ENCODE measurements at regions of chr7 and their contacts with region 1.

Region 1: DNA sequence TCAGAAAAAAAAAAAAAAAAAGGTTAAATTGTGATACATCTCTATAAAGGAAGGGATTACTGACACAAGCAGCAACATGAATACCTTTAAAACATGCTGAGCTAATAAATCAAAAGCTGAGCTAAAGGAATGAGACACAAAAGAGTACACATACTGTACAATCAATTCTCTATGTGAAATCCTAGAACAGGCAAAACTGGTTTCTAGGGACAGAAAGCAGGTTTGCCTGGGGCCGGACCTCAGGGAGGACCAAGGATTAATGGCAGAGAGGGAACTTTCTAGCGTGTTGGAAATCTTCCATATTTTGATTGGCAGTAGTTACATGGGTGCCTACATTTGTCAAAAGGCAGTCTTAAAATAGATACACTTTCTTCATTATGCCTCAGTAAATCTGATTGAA is 52.5 kb downstream of the KLRG2 start:
- DNase-seq: no peak
- ATAC-seq: no peak
- H3K4me3 ChIP-seq: no peak overlapping the region
- H3K27ac ChIP-seq: no peak overlapping the region
- H3K4me1 ChIP-seq: no peaks in the 10 kb centered on the region
- H3K27me3 ChIP-seq: no peaks in the 10 kb centered on the region
- CTCF ChIP-seq: no peak
- EP300 ChIP-seq: no peak
- POLR2A ChIP-seq: no peak
- RAD21 ChIP-seq: no peak

Region 2: DNA sequence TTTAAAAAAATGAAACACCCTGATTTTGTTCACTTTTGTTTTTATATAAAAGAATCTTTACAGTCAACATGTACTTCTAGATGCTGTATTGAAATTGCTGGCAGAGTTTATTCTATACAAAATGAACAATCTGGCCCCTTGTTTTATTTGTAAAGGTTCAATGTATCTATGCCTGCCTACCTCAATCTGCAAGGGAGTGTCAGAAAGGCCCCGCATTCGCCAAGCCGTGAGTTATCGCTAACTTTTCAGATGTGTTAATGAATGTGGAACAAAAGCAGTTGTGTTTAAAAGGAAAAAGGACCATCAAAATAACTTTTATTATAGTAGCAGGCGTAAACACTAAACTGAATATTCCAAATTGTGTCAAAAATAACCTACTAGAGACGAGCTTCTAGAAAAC is 56.8 kb before region 1 on chr7:
- CTCF ChIA-PET with region 1: interaction called, 14 read pairs
- POLR2A ChIA-PET with region 1: interaction called, 6 read pairs
- RAD21 ChIA-PET with region 1: no interaction called
- SMC1A ChIA-PET with region 1: no interaction called
- in situ Hi-C with region 1: no loop called
- intact Hi-C with region 1: no loop called
- DNase-seq: no peak
- ATAC-seq: no peak
- H3K4me3 ChIP-seq: no peak overlapping the region
- H3K27ac ChIP-seq: no peak overlapping the region
- H3K4me1 ChIP-seq: no peaks in the 10 kb centered on the region
- H3K27me3 ChIP-seq: no peaks in the 10 kb centered on the region
- CTCF ChIP-seq: no peak
- EP300 ChIP-seq: no peak
- POLR2A ChIP-seq: no peak
- RAD21 ChIP-seq: no peak

Region 3: DNA sequence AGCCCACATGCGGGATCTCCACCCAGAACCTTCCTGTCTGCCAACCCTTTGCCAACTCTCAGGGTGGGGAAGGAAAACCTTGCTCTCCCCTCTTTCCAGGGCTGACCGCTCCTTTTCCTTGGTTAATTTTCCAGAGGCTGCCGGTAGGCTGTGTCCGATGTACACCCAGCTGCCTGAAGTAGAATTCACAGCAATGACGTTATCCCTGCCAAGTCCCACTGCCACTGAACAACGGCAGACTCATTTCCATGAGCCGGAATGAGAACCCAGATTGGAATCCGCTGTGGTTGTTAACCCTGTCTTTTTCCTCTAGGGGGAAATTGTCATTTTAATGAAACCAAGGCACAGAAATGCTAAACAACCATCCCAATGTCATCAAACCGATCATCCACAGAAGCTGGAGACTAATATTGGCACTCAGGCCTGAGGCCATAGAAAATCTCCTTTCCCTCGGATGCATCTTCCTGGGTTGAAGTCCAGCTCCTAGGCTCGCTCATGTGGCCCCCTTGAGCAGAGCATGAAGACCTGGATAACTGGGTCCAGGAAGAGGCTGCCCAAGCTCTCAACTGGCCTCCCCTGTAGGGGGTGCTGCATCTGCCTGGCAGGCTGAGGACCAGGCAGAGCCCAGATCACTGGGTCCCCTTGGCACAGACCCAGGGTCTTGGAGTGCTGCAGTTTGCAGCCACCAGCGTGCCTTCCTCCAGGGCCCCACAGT is 22.1 kb after region 1 on chr7:
- CTCF ChIA-PET with region 1: interaction called, 21 read pairs
- POLR2A ChIA-PET with region 1: no interaction called
- RAD21 ChIA-PET with region 1: no interaction called
- SMC1A ChIA-PET with region 1: interaction called, 4 read pairs
- in situ Hi-C with region 1: no loop called
- intact Hi-C with region 1: no loop called
- DNase-seq: no peak
- ATAC-seq: no peak
- H3K4me3 ChIP-seq: no peak overlapping the region
- H3K27ac ChIP-seq: no peak overlapping the region
- H3K4me1 ChIP-seq: no peaks in the 10 kb centered on the region
- H3K27me3 ChIP-seq: no peaks in the 10 kb centered on the region
- CTCF ChIP-seq: no peak
- EP300 ChIP-seq: no peak
- POLR2A ChIP-seq: no peak
- RAD21 ChIP-seq: no peak

Region 4: GRCh38 chr7:139505563-139505962 is 74.6 kb after region 1 on chr7:
- CTCF ChIA-PET with region 1: interaction called, 25 read pairs
- POLR2A ChIA-PET with region 1: no interaction called
- RAD21 ChIA-PET with region 1: interaction called, 9 read pairs
- SMC1A ChIA-PET with region 1: no interaction called
- in situ Hi-C with region 1: no loop called
- intact Hi-C with region 1: no loop called
- DNase-seq: no peak
- ATAC-seq: peak; percentile 43; the same call in 1 of the 3 replicates
- H3K4me3 ChIP-seq: no peak overlapping the region
- H3K27ac ChIP-seq: no peak overlapping the region
- H3K4me1 ChIP-seq: no peaks in the 10 kb centered on the region
- H3K27me3 ChIP-seq: no peaks in the 10 kb centered on the region
- CTCF ChIP-seq: peak; percentile 13 to 34 (median 18); a peak in 3 of 6 replicates
- EP300 ChIP-seq: no peak
- POLR2A ChIP-seq: no peak
- RAD21 ChIP-seq: 0 out of 2 replicates have a peak, but pooled peaks have one; percentile 8

Region 5: DNA sequence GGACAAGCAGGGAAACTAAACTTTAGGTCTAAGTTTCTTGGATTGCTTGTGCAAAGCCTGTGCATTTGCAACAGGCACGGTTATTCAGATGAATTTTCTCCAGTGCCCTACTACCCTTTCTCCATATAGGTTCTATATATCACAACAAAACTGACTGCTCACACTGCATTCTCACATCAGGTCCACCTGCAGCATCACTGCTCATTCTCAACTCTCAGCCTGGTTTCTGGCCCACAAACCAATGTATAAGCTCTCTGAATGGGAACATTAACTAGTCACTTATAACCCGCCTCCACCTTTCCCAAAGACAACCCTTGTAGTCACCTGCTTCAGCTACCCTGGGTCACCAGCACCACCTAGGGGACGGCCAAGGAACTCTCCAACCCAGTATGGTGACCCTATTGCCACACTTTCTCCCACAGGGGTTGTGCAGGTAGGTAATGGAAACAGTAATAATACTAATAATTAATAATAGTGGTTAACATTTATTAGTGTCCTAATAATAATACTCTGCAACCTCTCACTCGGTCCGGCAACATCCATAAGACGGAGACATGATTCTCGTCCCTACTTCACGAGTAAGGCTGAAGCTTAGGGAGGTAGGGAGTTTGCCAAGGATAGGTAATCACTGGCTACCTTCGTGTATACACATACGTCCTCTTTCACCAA is 189.8 kb after region 1 on chr7:
- CTCF ChIA-PET with region 1: interaction called, 17 read pairs
- POLR2A ChIA-PET with region 1: no interaction called
- RAD21 ChIA-PET with region 1: interaction called, 3 read pairs
- SMC1A ChIA-PET with region 1: interaction called, 11 read pairs
- in situ Hi-C with region 1: no loop called
- intact Hi-C with region 1: loop called (anchors 5 kb)
- DNase-seq: no peak
- ATAC-seq: peak; percentile 96
- H3K4me3 ChIP-seq: no peak overlapping the region
- H3K27ac ChIP-seq: no peak overlapping the region
- H3K4me1 ChIP-seq: no peaks in the 10 kb centered on the region
- H3K27me3 ChIP-seq: no peaks in the 10 kb centered on the region
- CTCF ChIP-seq: peak; percentile 54 to 84 (median 83)
- EP300 ChIP-seq: no peak
- POLR2A ChIP-seq: no peak
- RAD21 ChIP-seq: peak; percentile 67